MCF 10A (cell line): ENCODE measurements at regions of chr3 and their contacts with region 1.

Region 1: DNA sequence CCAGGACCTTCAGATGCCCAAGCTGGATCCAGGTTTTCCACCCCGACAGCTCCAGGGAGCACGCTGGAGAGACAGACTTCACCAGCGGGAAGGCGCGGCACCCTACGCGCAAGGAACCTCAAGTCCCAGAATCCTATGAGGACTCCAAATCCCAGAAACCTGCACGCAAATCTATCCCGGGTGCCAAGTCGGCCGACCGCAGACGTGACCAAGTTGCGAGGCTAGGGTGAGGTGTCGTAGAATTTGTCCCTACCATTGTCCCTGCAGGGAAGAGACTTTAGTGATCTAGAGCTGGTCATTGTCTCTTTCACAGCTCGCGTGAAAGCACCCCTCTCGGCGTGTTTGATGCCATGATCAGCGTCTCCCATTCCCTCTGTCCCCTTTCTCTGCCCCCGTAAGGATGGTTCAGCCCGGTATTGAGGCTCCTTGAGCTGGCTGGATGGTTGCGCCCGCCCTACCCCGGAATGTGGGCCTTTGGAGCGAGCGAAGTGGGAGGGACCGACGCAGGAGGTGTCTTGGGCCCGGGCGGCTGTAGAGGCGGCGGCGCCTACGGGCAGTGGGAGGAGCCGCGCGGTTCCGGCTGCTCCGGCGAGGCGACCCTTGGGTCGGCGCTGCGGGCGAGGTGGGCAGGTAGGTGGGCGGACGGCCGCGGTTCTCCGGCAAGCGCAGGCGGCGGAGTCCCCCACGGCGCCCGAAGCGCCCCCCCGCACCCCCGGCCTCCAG is at the start of gene PRKCI:
- DNase-seq: peak; percentile 98
- H3K4me3 Mint-ChIP-seq: peak within 1 kb of the TSS; percentile 86
- H3K27ac Mint-ChIP-seq: peak within 1 kb of the TSS; percentile 99
- H3K4me1 Mint-ChIP-seq: peaks cover 24% of the 10 kb centered on the region
- H3K27me3 Mint-ChIP-seq: no peaks in the 10 kb centered on the region
- CTCF ChIP-seq: no peak
- total RNA-seq, gene PRKCI: 46.3 and 62.8 TPM in 2 replicates

Region 2: GRCh38 chr3:170189398-170190256 is 32.5 kb before region 1 on chr3:
- CTCF ChIA-PET with region 1: interaction called, 6 read pairs
- POLR2A ChIA-PET with region 1: interaction called, 5 read pairs
- intact Hi-C with region 1: loop called (anchors 5 kb)
- DNase-seq: no peak
- H3K4me3 Mint-ChIP-seq: no peak overlapping the region
- H3K27ac Mint-ChIP-seq: no peak overlapping the region
- H3K4me1 Mint-ChIP-seq: no peaks in the 10 kb centered on the region
- H3K27me3 Mint-ChIP-seq: no peaks in the 10 kb centered on the region
- CTCF ChIP-seq: no peak

Region 3: GRCh38 chr3:170207717-170208116 is 14.4 kb before region 1 on chr3:
- CTCF ChIA-PET with region 1: no interaction called
- POLR2A ChIA-PET with region 1: interaction called, 14 read pairs
- intact Hi-C with region 1: no loop called
- DNase-seq: peak; percentile 38
- H3K4me3 Mint-ChIP-seq: no peak overlapping the region
- H3K27ac Mint-ChIP-seq: no peak overlapping the region
- H3K4me1 Mint-ChIP-seq: no peaks in the 10 kb centered on the region
- H3K27me3 Mint-ChIP-seq: no peaks in the 10 kb centered on the region
- CTCF ChIP-seq: no peak

Region 4: GRCh38 chr3:170233530-170233929 is 11.4 kb after region 1 on chr3:
- CTCF ChIA-PET with region 1: interaction called, 4 read pairs
- POLR2A ChIA-PET with region 1: interaction called, 75 read pairs
- intact Hi-C with region 1: no loop called
- DNase-seq: peak; percentile 54
- H3K4me3 Mint-ChIP-seq: no peak overlapping the region
- H3K27ac Mint-ChIP-seq: peak overlapping the region; percentile 86
- H3K4me1 Mint-ChIP-seq: peaks cover 7% of the 10 kb centered on the region
- H3K27me3 Mint-ChIP-seq: no peaks in the 10 kb centered on the region
- CTCF ChIP-seq: no peak